Ovary (tissue), 10 donors: ENCODE measurements at regions of chr21 and their contacts with region 1.

Region 1: GRCh38 chr21:32826329-32827167 is 55.0 kb upstream of the PAXBP1 start:
- DNase-seq: peak in 4 of 5 donors; percentile 24 to 68 (median 40)
- H3K4me3 ChIP-seq: no peak overlapping the region
- H3K27ac ChIP-seq: no peak overlapping the region
- H3K4me1 ChIP-seq: no peaks in the 10 kb centered on the region
- H3K27me3 ChIP-seq: no peaks in the 10 kb centered on the region
- CTCF ChIP-seq: peak; percentile 37 to 57 (median 51)
- EP300 ChIP-seq: no peak
- POLR2A ChIP-seq: no peak

Region 2: DNA sequence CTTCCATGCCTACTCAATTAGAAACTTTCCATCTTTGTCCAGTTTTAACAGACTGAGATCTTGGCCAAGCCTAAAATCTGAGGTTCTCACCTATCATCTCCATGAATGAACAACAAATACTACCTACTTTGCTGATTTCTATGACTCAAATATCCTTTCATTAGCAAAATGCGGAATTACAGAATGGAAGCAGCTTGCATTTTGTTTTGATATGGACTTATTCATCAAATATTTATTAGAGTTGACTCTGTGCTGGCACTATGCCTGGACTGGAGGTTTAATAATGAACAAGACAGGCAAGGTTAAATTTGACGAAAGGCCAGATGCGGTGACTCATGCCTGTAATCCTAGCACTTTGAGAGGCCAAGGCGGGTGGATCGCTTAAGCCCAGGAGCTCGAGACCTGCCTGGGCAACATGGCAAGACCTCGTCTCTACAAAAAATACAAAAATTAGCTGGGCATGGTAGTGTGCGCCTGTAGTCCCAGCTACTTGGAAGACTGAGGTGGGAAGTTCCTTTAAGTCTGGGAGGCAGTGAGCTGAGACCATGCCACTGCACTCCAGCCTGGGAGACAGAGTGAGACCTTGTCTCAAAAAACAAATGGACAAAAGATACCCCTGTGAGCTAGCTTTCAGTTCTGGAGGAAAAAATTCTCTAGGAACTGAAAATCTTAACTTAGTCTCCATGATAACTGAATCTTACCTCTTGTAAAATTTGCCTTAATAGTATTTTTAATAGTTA is 1196.4 kb before region 1 on chr21:
- intact Hi-C with region 1: no loop called
- DNase-seq: peak in 1 of 5 donors; percentile 22
- H3K4me3 ChIP-seq: no peak overlapping the region
- H3K27ac ChIP-seq: no peak overlapping the region
- H3K4me1 ChIP-seq: no peaks in the 10 kb centered on the region
- H3K27me3 ChIP-seq: no peaks in the 10 kb centered on the region
- CTCF ChIP-seq: no peak
- EP300 ChIP-seq: no peak
- POLR2A ChIP-seq: no peak

Region 3: GRCh38 chr21:32523988-32524719 is 302.4 kb before region 1 on chr21:
- intact Hi-C with region 1: no loop called
- DNase-seq: peak in 1 of 5 donors; percentile 42
- H3K4me3 ChIP-seq: no peak overlapping the region
- H3K27ac ChIP-seq: no peak overlapping the region
- H3K4me1 ChIP-seq: peaks cover 7% of the 10 kb centered on the region
- H3K27me3 ChIP-seq: no peaks in the 10 kb centered on the region
- CTCF ChIP-seq: no peak
- EP300 ChIP-seq: no peak
- POLR2A ChIP-seq: no peak

Region 4: GRCh38 chr21:32641710-32642698 is 184.5 kb before region 1 on chr21:
- intact Hi-C with region 1: loop called in 1 of 4 experiments (anchors 10 kb)
- DNase-seq: no peak
- H3K4me3 ChIP-seq: no peak overlapping the region
- H3K27ac ChIP-seq: no peak overlapping the region
- H3K4me1 ChIP-seq: no peaks in the 10 kb centered on the region
- H3K27me3 ChIP-seq: no peaks in the 10 kb centered on the region
- CTCF ChIP-seq: no peak
- EP300 ChIP-seq: no peak
- POLR2A ChIP-seq: no peak